Psoas muscle (tissue), 8 donors: ENCODE measurements at regions of chr5 and their contacts with region 1.

Region 1: GRCh38 chr5:147628058-147628895 is 118.4 kb upstream of the DPYSL3 start:
- DNase-seq: no peak
- ATAC-seq: peak; percentile 53 to 86 (median 66)
- H3K4me3 ChIP-seq: no peak overlapping the region
- H3K27ac ChIP-seq: no peak overlapping the region
- H3K4me1 ChIP-seq: no peaks in the 10 kb centered on the region
- H3K27me3 ChIP-seq: no peaks in the 10 kb centered on the region
- CTCF ChIP-seq: peak; percentile 61

Region 2: GRCh38 chr5:147673266-147673665 is 45.0 kb after region 1 on chr5:
- intact Hi-C with region 1: no loop called
- DNase-seq: no peak
- ATAC-seq: no peak
- H3K4me3 ChIP-seq: no peak overlapping the region
- H3K27ac ChIP-seq: no peak overlapping the region
- H3K4me1 ChIP-seq: no peaks in the 10 kb centered on the region
- H3K27me3 ChIP-seq: no peaks in the 10 kb centered on the region
- CTCF ChIP-seq: no peak

Region 3: GRCh38 chr5:147822686-147823491 is 194.6 kb after region 1 on chr5:
- intact Hi-C with region 1: loop called (anchors 2 to 5 kb)
- DNase-seq: no peak
- ATAC-seq: peak in 2 of 4 donors; percentile 43 to 66
- H3K4me3 ChIP-seq: no peak overlapping the region
- H3K27ac ChIP-seq: no peak overlapping the region
- H3K4me1 ChIP-seq: no peaks in the 10 kb centered on the region
- H3K27me3 ChIP-seq: no peaks in the 10 kb centered on the region
- CTCF ChIP-seq: peak; percentile 58